ENCODE measurements at regions of chr6 and their contacts with region 1.

Region 1: GRCh38 chr6:149316798-149317655 is 485 bp upstream of the TAB2 start:
- DNase-seq: peak; percentile 96
- H3K4me3 ChIP-seq: peak overlapping the region; percentile 93
- H3K27ac ChIP-seq: peak overlapping the region; percentile 96
- H3K4me1 ChIP-seq: peaks cover 28% of the 10 kb centered on the region
- H3K27me3 ChIP-seq: peaks cover 4% of the 10 kb centered on the region
- CTCF ChIP-seq: no peak

Region 2: GRCh38 chr6:149354009-149354408 is 37.0 kb after region 1 on chr6:
- CTCF ChIA-PET with region 1: no interaction called
- POLR2A ChIA-PET with region 1: no interaction called
- intact Hi-C with region 1: no loop called
- DNase-seq: no peak
- H3K4me3 ChIP-seq: no peak overlapping the region
- H3K27ac ChIP-seq: no peak overlapping the region
- H3K4me1 ChIP-seq: peaks cover 11% of the 10 kb centered on the region
- H3K27me3 ChIP-seq: no peaks in the 10 kb centered on the region
- CTCF ChIP-seq: no peak

Region 3: DNA sequence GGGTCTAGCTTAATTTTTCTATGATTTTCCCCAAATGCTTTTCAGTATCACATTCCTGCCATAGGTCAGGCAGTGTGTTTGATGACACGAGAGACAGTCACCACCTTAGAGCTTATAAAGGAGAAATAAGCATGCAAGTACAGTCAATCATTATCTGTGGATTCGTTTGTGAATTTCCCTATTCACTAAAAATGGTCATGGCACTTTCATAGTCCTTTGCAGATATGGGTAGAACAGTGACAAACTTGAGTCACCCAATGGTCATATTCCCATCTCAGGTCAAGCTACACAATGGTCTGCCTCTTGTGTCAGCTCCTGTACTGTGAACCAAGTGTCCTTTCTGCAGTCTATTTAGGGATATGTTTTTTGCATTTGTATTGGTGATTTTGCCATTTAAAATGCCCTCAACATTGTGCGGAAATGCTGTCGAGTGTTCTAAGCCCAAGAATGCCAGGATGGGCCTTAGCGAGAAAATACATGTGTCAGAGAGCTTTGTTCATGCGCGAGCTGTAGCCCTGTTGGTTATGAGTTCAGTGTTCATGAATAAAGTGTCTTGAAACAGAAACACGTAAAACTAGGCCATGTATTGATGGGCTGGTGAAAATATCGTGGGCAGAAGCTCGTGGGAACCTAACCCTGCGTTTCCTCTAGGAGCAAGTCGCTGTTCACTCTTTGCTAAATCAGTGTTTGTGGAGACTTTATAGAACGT is 102.8 kb after region 1 on chr6:
- CTCF ChIA-PET with region 1: no interaction called
- POLR2A ChIA-PET with region 1: no interaction called
- intact Hi-C with region 1: loop called (anchors 5 kb)
- DNase-seq: no peak
- H3K4me3 ChIP-seq: no peak overlapping the region
- H3K27ac ChIP-seq: no peak overlapping the region
- H3K4me1 ChIP-seq: no peaks in the 10 kb centered on the region
- H3K27me3 ChIP-seq: no peaks in the 10 kb centered on the region
- CTCF ChIP-seq: no peak